ENCODE measurements at regions of chr3 and their contacts with region 1.

Region 1: GRCh38 chr3:192444096-192444790 is 283.1 kb downstream of the FGF12 start:
- DNase-seq: peak in 1 of 2 donors; percentile 34
- ATAC-seq: peak; percentile 66

Region 2: GRCh38 chr3:191412759-191413158 is 1031.5 kb before region 1 on chr3:
- intact Hi-C with region 1: loop called in 1 of 2 experiments (anchors 10 kb)
- DNase-seq: no peak
- ATAC-seq: no peak

Region 3: GRCh38 chr3:192130534-192131132 is 313.6 kb before region 1 on chr3:
- intact Hi-C with region 1: loop called in 1 of 2 experiments (anchors 10 kb)
- DNase-seq: peak; percentile 22 to 33
- ATAC-seq: peak; percentile 49

Region 4: GRCh38 chr3:192284443-192285087 is 159.7 kb before region 1 on chr3:
- intact Hi-C with region 1: no loop called
- DNase-seq: no peak
- ATAC-seq: no peak

Region 5: DNA sequence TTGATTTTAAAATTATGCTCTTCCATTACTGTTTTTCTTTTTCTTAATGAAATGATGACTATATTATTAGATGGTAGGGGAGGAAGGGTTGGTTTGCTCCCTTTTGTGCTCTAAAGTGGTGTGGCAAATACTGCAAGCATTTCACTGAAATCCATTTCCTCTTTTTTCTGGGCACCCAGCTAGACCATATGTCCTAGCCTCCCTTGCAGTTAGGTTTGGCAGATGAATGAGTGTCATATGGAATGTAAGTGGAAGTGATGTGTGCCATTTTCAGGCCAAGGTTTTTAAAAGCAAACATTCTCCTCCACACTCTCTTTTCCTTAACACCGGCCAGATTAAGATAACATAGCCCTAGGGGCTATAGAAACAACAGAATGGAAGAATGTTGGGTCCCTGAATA is 79.9 kb before region 1 on chr3:
- intact Hi-C with region 1: no loop called
- DNase-seq: no peak
- ATAC-seq: no peak

Region 6: GRCh38 chr3:192501401-192501800 is 57.2 kb after region 1 on chr3:
- intact Hi-C with region 1: no loop called
- DNase-seq: no peak
- ATAC-seq: no peak